ENCODE measurements at regions of chr15 and their contacts with region 1.

Region 1: GRCh38 chr15:31024979-31025378 is 33.6 kb upstream of the MTMR10 start:
- DNase-seq: no peak
- H3K4me3 ChIP-seq: no peak overlapping the region
- H3K27ac ChIP-seq: no peak overlapping the region
- H3K4me1 ChIP-seq: peaks cover 0 to 14% (median 4%) of the 10 kb centered on the region in 4 donors
- H3K27me3 ChIP-seq: no peaks in the 10 kb centered on the region
- CTCF ChIP-seq: no peak
- EP300 ChIP-seq: no peak
- POLR2A ChIP-seq: no peak

Region 2: GRCh38 chr15:30929064-30929669 is 95.8 kb before region 1 on chr15:
- in situ Hi-C with region 1: no loop called
- intact Hi-C with region 1: no loop called
- DNase-seq: no peak
- H3K4me3 ChIP-seq: no peak overlapping the region
- H3K27ac ChIP-seq: no peak overlapping the region
- H3K4me1 ChIP-seq: no peaks in the 10 kb centered on the region
- H3K27me3 ChIP-seq: no peaks in the 10 kb centered on the region
- CTCF ChIP-seq: no peak
- EP300 ChIP-seq: no peak
- POLR2A ChIP-seq: no peak

Region 3: GRCh38 chr15:30979457-30979856 is 45.5 kb before region 1 on chr15:
- in situ Hi-C with region 1: loop called in 1 of 4 experiments (anchors 5 kb)
- intact Hi-C with region 1: no loop called
- DNase-seq: no peak
- H3K4me3 ChIP-seq: no peak overlapping the region
- H3K27ac ChIP-seq: no peak overlapping the region
- H3K4me1 ChIP-seq: peaks cover 0 to 36% (median 10%) of the 10 kb centered on the region in 4 donors
- H3K27me3 ChIP-seq: no peaks in the 10 kb centered on the region
- CTCF ChIP-seq: no peak
- EP300 ChIP-seq: no peak
- POLR2A ChIP-seq: no peak

Region 4: GRCh38 chr15:31069360-31070000 is 44.5 kb after region 1 on chr15:
- in situ Hi-C with region 1: no loop called
- intact Hi-C with region 1: no loop called
- DNase-seq: no peak
- H3K4me3 ChIP-seq: no peak overlapping the region
- H3K27ac ChIP-seq: peak overlapping the region in 1 of 4 donors; percentile 33
- H3K4me1 ChIP-seq: peaks cover 0 to 7% (median 2%) of the 10 kb centered on the region in 4 donors
- H3K27me3 ChIP-seq: no peaks in the 10 kb centered on the region
- CTCF ChIP-seq: no peak
- EP300 ChIP-seq: no peak
- POLR2A ChIP-seq: no peak

Measured in transverse colon (tissue), 4 donors.